ENCODE measurements at regions of chr3 and their contacts with region 1.

Region 1: DNA sequence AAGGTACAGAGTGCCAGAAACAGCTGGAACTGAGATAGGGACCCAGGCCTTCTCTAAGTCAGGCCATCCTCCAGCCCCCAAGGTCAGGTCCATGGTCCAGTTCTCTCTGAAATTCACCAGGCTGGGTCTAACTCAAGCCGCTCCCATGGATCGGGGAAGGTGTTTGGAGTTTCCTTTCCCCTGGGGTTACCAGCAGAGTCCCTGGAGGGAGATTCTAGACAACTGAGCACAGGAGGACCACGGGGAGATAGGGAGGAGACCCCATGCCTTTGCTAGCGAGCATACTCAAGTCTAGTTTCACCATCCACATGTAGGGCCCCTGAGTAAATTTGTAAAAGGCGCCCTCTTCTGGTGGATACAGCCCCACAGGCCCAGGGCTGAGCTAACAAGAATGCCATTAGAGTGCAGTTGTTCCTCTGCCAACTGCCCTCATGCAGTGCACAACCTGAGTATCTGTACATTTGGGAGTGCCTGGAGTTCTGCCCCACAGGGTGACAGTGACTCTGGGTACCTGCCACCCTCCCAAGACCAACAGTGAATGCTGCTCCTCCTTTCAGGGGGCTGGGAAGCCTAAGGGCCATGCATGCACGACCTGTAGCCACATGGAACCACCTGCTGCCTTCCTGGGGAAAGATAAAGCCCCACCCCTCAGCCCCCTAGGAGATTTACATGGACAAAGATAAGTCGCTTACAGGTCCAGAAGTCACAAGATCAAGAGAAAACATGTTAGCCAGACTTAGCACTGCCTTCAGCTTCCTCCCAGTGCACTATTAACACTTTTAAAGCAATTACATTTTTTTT is 89.0 kb downstream of the IQSEC1 start:
- DNase-seq: peak; percentile 81
- ATAC-seq: peak; percentile 86
- H3K4me3 Mint-ChIP-seq: no peak overlapping the region
- H3K27ac Mint-ChIP-seq: peak overlapping the region; percentile 30
- H3K4me1 Mint-ChIP-seq: peaks cover 35% of the 10 kb centered on the region
- H3K27me3 Mint-ChIP-seq: no peaks in the 10 kb centered on the region
- CTCF ChIP-seq: peak; percentile 70

Region 2: DNA sequence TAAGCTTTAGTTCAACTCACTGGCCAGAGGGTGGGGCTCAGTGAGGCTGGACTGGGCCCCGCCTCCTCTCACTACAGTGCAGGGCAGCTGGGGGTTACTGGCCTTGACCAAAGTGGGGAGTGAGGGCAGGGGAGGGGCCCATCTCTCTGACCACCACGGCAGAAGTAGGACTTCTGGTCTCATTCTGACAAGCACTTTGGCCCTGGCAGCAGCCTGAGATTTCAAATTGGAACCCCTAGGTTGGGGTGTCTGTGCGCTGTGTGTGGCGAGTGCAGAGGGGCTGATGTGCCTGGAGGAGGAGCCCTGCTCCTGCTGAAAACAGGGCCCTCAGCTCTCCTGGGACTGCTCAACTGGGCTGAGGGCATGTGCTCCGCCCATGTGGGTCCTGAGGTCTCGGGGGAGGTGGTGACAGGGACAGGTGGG is 82.6 kb before region 1 on chr3:
- CTCF ChIA-PET with region 1: interaction called, 3 read pairs
- POLR2A ChIA-PET with region 1: no interaction called
- intact Hi-C with region 1: loop called (anchors 10 kb)
- DNase-seq: no peak
- ATAC-seq: no peak
- H3K4me3 Mint-ChIP-seq: no peak overlapping the region
- H3K27ac Mint-ChIP-seq: no peak overlapping the region
- H3K4me1 Mint-ChIP-seq: peaks cover under 1% of the 10 kb centered on the region
- H3K27me3 Mint-ChIP-seq: no peaks in the 10 kb centered on the region
- CTCF ChIP-seq: no peak

Region 3: GRCh38 chr3:12948891-12949711 is 35.1 kb before region 1 on chr3:
- CTCF ChIA-PET with region 1: interaction called, 11 read pairs
- POLR2A ChIA-PET with region 1: interaction called, 4 read pairs
- intact Hi-C with region 1: no loop called
- DNase-seq: peak; percentile 78
- ATAC-seq: peak; percentile 89
- H3K4me3 Mint-ChIP-seq: peak overlapping the region; percentile 17
- H3K27ac Mint-ChIP-seq: peak overlapping the region; percentile 76
- H3K4me1 Mint-ChIP-seq: peaks cover 44% of the 10 kb centered on the region
- H3K27me3 Mint-ChIP-seq: no peaks in the 10 kb centered on the region
- CTCF ChIP-seq: peak; percentile 18

Region 4: GRCh38 chr3:12967606-12968351 is 16.4 kb before region 1 on chr3:
- CTCF ChIA-PET with region 1: interaction called, 14 read pairs
- POLR2A ChIA-PET with region 1: interaction called, 4 read pairs
- intact Hi-C with region 1: no loop called
- DNase-seq: peak; percentile 90
- ATAC-seq: peak; percentile 95
- H3K4me3 Mint-ChIP-seq: peak overlapping the region; percentile 71
- H3K27ac Mint-ChIP-seq: no peak overlapping the region
- H3K4me1 Mint-ChIP-seq: peaks cover 51% of the 10 kb centered on the region
- H3K27me3 Mint-ChIP-seq: no peaks in the 10 kb centered on the region
- CTCF ChIP-seq: no peak

Region 5: DNA sequence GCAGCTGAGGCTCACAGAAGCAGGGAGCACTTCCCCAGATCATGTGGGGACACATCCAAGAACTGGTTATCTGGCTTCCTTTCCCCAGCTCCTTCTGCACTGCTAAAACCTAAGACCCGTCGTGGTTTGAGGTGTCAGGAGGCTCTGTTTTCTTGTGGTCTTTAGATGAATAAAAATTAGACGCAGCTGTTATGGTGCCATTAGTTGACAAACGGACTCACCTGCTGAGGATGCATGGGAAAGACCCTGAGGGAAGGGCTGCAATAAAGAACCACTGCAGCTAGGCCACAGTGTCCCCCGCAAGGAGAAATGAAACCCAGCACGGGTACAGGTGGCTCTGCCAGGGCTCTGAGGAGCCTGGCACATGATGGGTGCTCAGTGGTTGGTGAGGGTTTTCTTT is 10.4 kb before region 1 on chr3:
- CTCF ChIA-PET with region 1: interaction called, 14 read pairs
- POLR2A ChIA-PET with region 1: no interaction called
- intact Hi-C with region 1: no loop called
- DNase-seq: no peak
- ATAC-seq: no peak
- H3K4me3 Mint-ChIP-seq: no peak overlapping the region
- H3K27ac Mint-ChIP-seq: no peak overlapping the region
- H3K4me1 Mint-ChIP-seq: peaks cover 12% of the 10 kb centered on the region
- H3K27me3 Mint-ChIP-seq: no peaks in the 10 kb centered on the region
- CTCF ChIP-seq: no peak

Region 6: DNA sequence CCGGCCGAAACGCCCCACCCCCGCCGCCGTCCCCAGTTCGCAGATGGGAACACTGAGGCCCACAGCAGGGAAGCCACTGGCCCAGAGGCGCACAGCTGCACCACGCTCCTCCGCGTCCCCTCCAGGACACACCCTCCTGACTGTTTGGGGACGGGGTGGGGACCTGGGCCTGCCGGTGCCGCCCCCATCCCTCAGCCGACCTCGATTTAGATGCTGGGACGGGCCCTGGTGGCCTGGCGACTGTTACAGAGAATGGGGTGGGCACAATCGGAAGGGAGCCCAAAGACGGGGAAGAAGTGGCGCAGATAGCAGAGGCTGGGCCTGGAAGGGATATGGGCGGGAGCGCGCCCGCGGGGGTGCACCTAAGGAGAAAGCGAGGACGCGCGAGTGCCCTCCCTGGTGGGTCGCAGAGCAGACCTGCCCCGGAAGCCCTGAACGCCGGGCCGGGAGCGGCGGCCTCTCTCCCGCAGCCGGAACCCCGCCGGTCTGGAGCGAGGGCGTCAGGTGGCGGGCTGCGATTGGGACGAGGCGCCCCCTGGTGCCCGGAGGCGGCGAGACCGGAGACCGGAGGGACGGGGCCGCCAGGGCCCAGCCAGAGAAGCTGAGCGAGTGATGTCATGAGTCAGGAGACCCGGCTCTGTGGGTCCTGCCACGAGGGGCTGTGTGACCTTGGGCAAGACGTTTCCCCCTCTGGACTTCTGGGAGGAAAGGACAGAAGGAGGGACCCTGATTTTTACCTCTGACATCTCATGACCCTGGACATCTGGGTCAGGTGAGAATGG is 10.6 kb after region 1 on chr3:
- CTCF ChIA-PET with region 1: interaction called, 66 read pairs
- POLR2A ChIA-PET with region 1: interaction called, 4 read pairs
- intact Hi-C with region 1: no loop called
- DNase-seq: peak; percentile 89
- ATAC-seq: peak; percentile 89
- H3K4me3 Mint-ChIP-seq: peak overlapping the region; percentile 94
- H3K27ac Mint-ChIP-seq: peak overlapping the region; percentile 88
- H3K4me1 Mint-ChIP-seq: peaks cover 55% of the 10 kb centered on the region
- H3K27me3 Mint-ChIP-seq: no peaks in the 10 kb centered on the region
- CTCF ChIP-seq: peak; percentile 90

Region 7: GRCh38 chr3:13005301-13005700 is 21.1 kb after region 1 on chr3:
- CTCF ChIA-PET with region 1: interaction called, 12 read pairs
- POLR2A ChIA-PET with region 1: no interaction called
- intact Hi-C with region 1: no loop called
- DNase-seq: no peak
- ATAC-seq: no peak
- H3K4me3 Mint-ChIP-seq: no peak overlapping the region
- H3K27ac Mint-ChIP-seq: no peak overlapping the region
- H3K4me1 Mint-ChIP-seq: peaks cover 86% of the 10 kb centered on the region
- H3K27me3 Mint-ChIP-seq: no peaks in the 10 kb centered on the region
- CTCF ChIP-seq: no peak

Region 8: DNA sequence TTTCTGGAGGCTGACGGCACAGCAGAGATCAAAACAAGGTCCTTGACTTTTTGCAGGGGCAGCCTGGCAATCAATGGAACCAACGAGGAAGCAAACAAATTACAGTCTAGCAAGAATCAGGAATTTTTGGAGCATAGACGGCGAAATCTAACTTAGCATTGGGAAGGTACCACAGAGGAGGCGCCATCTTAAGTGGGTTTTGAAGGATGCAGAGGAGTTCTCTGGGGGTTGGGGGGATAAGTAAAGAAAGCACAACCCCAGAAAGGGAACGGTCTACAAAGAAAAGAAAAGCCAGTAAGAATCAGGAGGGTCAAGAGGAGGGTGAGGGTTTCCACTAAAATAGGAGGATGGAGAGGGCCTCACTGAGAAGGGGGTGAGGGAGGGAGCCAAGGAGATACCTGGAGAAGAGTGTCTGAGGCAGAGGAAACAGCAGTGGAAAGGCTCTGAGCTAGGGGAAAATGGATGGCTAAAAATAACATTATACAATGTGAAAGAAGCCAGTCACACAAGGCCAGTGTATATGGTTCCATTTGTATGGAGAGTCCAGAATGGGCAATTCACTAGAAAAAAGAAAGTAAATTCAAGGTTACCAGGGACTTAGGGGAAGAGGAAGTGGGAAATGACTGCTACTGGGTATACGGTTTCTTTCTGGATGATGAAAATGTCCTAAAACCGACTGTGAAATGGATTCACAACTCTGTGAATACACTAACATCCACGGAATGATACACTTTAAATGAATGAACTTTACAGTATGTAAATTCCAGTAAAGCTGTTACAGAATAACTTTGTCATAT is 114.2 kb after region 1 on chr3:
- CTCF ChIA-PET with region 1: no interaction called
- POLR2A ChIA-PET with region 1: no interaction called
- intact Hi-C with region 1: no loop called
- DNase-seq: no peak
- ATAC-seq: no peak
- H3K4me3 Mint-ChIP-seq: no peak overlapping the region
- H3K27ac Mint-ChIP-seq: no peak overlapping the region
- H3K4me1 Mint-ChIP-seq: no peaks in the 10 kb centered on the region
- H3K27me3 Mint-ChIP-seq: no peaks in the 10 kb centered on the region
- CTCF ChIP-seq: no peak